Psoas muscle (tissue), 8 donors: ENCODE measurements at regions of chr18 and their contacts with region 1.

Region 1: GRCh38 chr18:63105636-63106316 is 213.8 kb downstream of the BCL2 start:
- DNase-seq: no peak
- ATAC-seq: peak; percentile 23 to 63 (median 46)
- H3K4me3 ChIP-seq: no peak overlapping the region
- H3K27ac ChIP-seq: no peak overlapping the region
- H3K4me1 ChIP-seq: peaks cover 4% of the 10 kb centered on the region
- H3K27me3 ChIP-seq: no peaks in the 10 kb centered on the region
- CTCF ChIP-seq: no peak

Region 2: DNA sequence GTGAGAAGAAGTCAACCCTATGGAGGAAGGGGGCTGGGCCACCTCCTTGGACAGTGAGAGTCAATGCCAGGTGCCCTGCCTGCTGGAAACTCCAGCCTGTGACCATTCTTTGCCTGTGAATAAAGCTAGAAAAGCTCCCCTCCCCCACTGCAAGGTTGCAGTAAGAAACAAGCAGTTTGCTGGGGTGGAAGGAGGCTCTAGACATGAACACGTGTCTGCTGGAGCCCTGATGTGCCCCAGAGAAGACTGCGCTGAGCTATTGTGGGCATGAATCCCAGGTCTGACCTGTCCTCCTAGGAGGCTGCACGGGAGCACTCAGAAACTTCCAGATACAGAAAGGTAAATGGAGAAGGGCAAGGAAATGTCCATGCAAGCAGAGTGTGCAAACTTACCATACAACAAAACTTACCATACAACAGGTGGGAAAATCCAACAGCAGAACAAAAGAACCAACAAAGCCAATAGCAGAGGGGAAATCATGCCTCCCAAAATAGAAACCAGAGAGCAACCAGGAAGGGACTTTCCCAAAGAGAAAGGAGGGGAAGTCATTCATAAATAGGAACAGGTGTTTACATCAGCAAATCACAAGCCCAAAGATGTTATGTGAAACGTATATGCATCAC is 64.9 kb before region 1 on chr18:
- intact Hi-C with region 1: loop called in 1 of 2 experiments (anchors 5 kb)
- DNase-seq: no peak
- ATAC-seq: no peak
- H3K4me3 ChIP-seq: no peak overlapping the region
- H3K27ac ChIP-seq: no peak overlapping the region
- H3K4me1 ChIP-seq: no peaks in the 10 kb centered on the region
- H3K27me3 ChIP-seq: no peaks in the 10 kb centered on the region
- CTCF ChIP-seq: no peak

Region 3: DNA sequence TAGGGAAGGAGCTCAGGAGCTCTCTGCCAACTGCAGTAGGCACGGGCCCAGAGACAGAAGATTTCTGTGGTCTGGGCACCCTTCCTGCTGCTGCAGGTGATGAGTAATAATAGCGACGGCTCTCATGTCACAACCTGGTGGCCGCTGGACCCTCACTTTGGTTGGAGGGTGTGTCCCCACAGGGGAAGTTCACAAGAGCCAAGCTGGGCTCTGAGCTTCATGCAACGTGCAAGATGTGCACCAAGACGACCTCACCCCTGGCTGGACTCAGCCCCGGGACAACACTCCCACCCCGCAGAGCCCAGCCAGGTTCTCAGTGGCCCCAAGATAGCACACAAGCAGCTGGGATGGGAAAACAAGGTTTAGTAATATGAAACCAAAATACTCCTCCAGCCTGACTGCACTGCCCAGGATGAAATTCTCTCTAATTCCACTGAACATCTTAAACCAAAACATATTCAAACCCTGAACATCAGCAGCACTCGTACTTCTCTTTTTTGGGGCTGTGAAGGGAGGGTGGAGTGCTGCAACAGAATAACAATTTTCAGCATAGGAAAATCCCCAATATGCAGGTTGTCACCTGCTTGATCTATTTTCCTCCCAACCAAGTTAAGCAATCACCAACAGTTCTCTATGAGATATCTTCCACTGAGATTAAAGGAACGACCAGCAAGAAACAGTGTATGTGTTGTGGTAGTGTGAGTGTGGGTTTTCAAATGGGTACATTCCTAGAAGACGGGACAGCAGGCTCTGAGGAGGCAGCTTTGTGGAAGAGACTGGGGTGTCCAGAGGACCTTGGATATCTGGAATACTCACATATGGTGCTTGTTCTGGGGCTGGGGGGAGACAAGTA is 187.3 kb after region 1 on chr18:
- intact Hi-C with region 1: no loop called
- DNase-seq: peak; percentile 31 to 70
- ATAC-seq: peak; percentile 84 to 90 (median 88)
- H3K4me3 ChIP-seq: peak overlapping the region; percentile 56
- H3K27ac ChIP-seq: peak overlapping the region; percentile 91
- H3K4me1 ChIP-seq: peaks cover 61% of the 10 kb centered on the region
- H3K27me3 ChIP-seq: no peaks in the 10 kb centered on the region
- CTCF ChIP-seq: no peak